Activated naive CD4-positive, alpha-beta T cell treated with anti-CD3 and anti-CD28 coated beads for 36 hours (primary cell): ENCODE measurements at regions of chr2 and their contacts with region 1.

Region 1: GRCh38 chr2:232444409-232445148 is 11.4 kb upstream of the ALPI start:
- DNase-seq: peak; percentile 85
- H3K4me3 Mint-ChIP-seq: no peak overlapping the region
- H3K27ac Mint-ChIP-seq: no peak overlapping the region
- H3K4me1 Mint-ChIP-seq: peaks cover 6% of the 10 kb centered on the region
- H3K27me3 Mint-ChIP-seq: no peaks in the 10 kb centered on the region

Region 2: GRCh38 chr2:232363786-232364600 is 80.6 kb before region 1 on chr2:
- CTCF ChIA-PET with region 1: interaction called, 10 read pairs
- intact Hi-C with region 1: no loop called
- DNase-seq: peak; percentile 47
- H3K4me3 Mint-ChIP-seq: peak overlapping the region; percentile 63
- H3K27ac Mint-ChIP-seq: peak overlapping the region; percentile 53
- H3K4me1 Mint-ChIP-seq: peaks cover 24% of the 10 kb centered on the region
- H3K27me3 Mint-ChIP-seq: no peaks in the 10 kb centered on the region

Region 3: DNA sequence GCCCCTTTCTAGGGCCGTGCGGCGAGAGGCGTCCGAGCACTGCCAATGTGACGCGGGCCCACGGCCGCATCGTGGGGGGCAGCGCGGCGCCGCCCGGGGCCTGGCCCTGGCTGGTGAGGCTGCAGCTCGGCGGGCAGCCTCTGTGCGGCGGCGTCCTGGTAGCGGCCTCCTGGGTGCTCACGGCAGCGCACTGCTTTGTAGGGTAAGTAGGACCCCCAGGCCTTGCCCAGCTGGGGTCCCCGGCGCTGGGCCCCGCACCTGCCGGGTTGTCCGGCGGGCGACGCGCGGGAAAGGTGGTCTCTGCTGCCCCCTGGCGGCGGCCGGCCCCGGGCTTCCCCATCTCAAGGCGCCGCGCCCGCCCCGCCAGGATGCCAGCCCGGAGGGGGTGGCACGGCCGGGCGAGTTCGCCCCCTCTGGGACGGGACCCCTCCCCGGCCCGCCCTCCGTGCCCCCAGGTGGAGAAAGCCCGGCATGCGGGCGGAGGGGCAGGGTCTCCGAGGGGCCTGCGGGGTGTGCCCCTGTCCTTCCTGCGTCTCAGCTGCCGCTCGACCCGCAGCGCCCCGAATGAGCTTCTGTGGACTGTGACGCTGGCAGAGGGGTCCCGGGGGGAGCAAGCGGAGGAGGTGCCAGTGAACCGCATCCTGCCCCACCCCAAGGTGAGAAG is 77.5 kb after region 1 on chr2:
- CTCF ChIA-PET with region 1: interaction called, 27 read pairs
- intact Hi-C with region 1: loop called (anchors 1 kb)
- DNase-seq: peak; percentile 63
- H3K4me3 Mint-ChIP-seq: no peak overlapping the region
- H3K27ac Mint-ChIP-seq: no peak overlapping the region
- H3K4me1 Mint-ChIP-seq: peaks cover 13% of the 10 kb centered on the region
- H3K27me3 Mint-ChIP-seq: peaks cover 39% of the 10 kb centered on the region